Breast epithelium (tissue), 4 donors: ENCODE measurements at regions of chr11 and their contacts with region 1.

Region 1: DNA sequence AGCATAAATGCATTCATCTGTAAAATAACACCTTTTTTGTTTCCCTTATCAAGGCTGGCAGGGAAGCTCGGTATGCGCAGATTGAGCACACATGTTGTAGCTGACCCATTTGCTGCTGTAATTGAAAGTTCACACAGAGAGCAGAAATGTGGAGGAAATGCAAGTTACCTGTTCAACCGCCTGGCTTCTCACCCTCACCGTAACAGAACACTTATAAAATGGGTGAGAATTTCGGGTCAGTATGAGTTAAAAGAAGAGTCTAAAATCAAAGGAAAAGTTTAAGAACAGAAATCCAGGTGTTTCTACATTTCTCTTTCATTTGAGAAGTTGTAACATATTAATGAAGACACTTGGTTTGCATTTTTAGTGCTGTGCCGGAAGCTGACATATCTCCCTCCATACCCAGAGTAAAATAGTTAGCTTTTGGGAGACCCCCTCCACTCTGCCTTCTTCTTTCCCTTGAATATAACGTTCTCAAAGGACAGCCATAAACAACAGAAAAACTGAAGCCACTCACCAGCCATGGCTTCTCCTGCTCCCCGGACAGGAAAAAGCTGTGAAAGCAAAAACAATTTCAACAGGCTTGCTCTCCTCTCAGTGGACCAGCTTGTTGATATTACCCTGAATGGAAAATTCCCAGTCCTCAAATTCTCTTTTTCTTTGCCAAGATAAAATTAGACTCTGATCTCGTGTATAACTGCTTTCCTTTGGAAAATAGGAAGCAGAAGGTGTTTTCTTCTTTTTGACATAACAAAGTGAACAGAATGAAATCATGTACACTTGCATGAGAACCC is at the start of gene CASP12:
- DNase-seq: no peak
- H3K4me3 ChIP-seq: peak within 1 kb of the TSS; percentile 29 to 60 (median 37)
- H3K27ac ChIP-seq: peak within 1 kb of the TSS; percentile 50 to 83
- H3K4me1 ChIP-seq: no peaks in the 10 kb centered on the region
- H3K27me3 ChIP-seq: no peaks in the 10 kb centered on the region
- CTCF ChIP-seq: no peak
- POLR2A ChIP-seq: no peak
- total RNA-seq, gene CASP12: 1.1 to 7.9 (median 1.6) TPM

Region 2: GRCh38 chr11:103947546-103947919 is 950.6 kb before region 1 on chr11:
- intact Hi-C with region 1: no loop called
- DNase-seq: no peak
- H3K4me3 ChIP-seq: no peak overlapping the region
- H3K27ac ChIP-seq: no peak overlapping the region
- H3K4me1 ChIP-seq: no peaks in the 10 kb centered on the region
- H3K27me3 ChIP-seq: no peaks in the 10 kb centered on the region
- CTCF ChIP-seq: no peak
- POLR2A ChIP-seq: no peak

Region 3: GRCh38 chr11:104609311-104610085 is 288.6 kb before region 1 on chr11:
- intact Hi-C with region 1: loop called (anchors 5 kb)
- DNase-seq: no peak
- H3K4me3 ChIP-seq: no peak overlapping the region
- H3K27ac ChIP-seq: peak overlapping the region; percentile 10 to 65
- H3K4me1 ChIP-seq: no peaks in the 10 kb centered on the region
- H3K27me3 ChIP-seq: no peaks in the 10 kb centered on the region
- CTCF ChIP-seq: peak in 2 of 3 donors; percentile 31 to 40
- POLR2A ChIP-seq: no peak

Region 4: GRCh38 chr11:105168457-105168856 is 270.4 kb after region 1 on chr11:
- intact Hi-C with region 1: no loop called
- DNase-seq: no peak
- H3K4me3 ChIP-seq: no peak overlapping the region
- H3K27ac ChIP-seq: no peak overlapping the region
- H3K4me1 ChIP-seq: no peaks in the 10 kb centered on the region
- H3K27me3 ChIP-seq: no peaks in the 10 kb centered on the region
- CTCF ChIP-seq: no peak
- POLR2A ChIP-seq: no peak